Activated T-helper 2 cell treated with anti-CD3 and anti-CD28 coated beads, Interferon-gamma antibody, Interleukin-2, Interleukin-4, amounts not matched to agents 10 μg/mL and 5 μg/mL and 100 μg/mL, durations not matched to agents 14 hours and 24 hours and 36 hours (primary cell): ENCODE measurements at regions of chrX and their contacts with region 1.

Region 1: DNA sequence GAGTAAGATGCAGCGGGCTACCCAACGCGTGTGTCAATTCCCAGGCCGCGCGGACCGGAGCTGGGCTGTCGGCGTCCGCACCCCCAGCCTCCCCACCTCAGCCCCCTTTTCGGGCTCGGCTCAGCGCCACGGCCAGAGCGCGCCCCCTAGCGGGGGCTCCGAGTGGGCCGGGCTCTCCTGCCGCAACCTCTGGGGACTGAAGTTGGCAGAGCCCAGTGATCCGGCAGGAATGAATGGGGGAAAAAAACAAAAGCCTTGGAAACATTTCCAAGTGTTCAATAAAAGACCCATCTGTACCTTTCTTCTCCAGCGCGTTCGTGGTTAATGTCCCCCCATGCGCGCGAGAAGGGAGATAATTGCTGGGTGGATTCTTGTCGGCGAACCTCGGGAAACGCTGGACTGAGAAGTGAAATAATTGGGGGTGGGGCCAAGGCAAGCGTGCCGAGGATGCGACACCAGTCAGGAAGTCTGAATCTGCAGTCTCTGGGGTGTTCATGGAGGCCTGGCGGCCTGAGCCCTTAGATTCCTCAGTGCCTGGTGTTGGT is 5.2 kb upstream of the ARX start:
- DNase-seq: no peak
- H3K4me3 Mint-ChIP-seq: peak overlapping the region; percentile 39
- H3K27ac Mint-ChIP-seq: no peak overlapping the region
- H3K4me1 Mint-ChIP-seq: peaks cover 7% of the 10 kb centered on the region
- H3K27me3 Mint-ChIP-seq: peaks cover 71% of the 10 kb centered on the region

Region 2: GRCh38 chrX:24767557-24767956 is 253.4 kb before region 1 on chrX:
- intact Hi-C with region 1: no loop called
- DNase-seq: no peak
- H3K4me3 Mint-ChIP-seq: no peak overlapping the region
- H3K27ac Mint-ChIP-seq: peak overlapping the region; percentile 42
- H3K4me1 Mint-ChIP-seq: peaks cover 8% of the 10 kb centered on the region
- H3K27me3 Mint-ChIP-seq: no peaks in the 10 kb centered on the region

Region 3: DNA sequence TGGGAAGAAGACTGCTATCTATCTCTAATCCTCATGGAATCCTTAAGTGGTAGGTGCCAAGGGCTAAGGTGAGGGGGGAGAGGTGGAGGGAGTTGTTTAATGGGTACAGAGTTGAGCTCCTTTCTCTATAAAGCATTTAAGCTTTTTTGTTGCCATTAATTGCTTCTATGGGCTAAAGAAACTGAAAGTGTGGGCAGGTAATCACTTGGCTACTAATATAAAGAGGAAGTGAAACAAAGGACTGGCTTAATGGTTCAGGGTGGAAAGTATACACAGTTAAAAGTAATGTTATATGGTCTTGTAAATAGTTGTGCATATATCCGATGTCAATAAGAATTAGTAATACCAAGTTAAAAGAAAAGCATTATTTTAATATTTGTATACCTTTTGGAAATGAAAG is 243.3 kb before region 1 on chrX:
- intact Hi-C with region 1: no loop called
- DNase-seq: no peak
- H3K4me3 Mint-ChIP-seq: no peak overlapping the region
- H3K27ac Mint-ChIP-seq: no peak overlapping the region
- H3K4me1 Mint-ChIP-seq: peaks cover 17% of the 10 kb centered on the region
- H3K27me3 Mint-ChIP-seq: no peaks in the 10 kb centered on the region

Region 4: DNA sequence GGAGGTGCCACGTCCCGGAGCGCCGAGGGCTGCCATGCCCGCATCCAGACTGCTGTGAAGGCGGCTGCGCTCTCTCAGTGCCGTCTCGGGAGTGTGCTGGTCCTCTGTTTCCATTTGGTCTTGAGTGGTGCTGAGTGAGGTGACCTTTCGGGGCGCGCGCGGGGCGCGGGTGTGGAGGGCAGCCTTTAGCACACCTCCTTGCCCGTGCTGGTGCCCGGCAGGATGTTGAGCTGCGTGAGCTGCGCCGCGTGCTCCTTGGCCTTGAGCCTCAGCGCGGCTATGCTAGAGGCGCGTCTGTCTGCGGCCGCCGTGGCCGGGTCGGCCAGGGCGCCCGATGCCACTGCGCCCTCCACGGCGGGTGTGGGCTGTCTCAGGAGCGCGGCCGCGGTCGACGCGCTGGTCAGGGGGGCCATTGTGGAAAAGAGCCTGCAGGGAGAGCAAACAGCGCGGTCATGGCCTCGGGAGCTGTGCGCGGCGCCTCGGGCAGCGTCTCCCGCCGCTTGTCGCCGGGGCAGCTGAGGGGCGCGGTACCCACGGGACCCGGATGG is 16.4 kb before region 1 on chrX:
- intact Hi-C with region 1: loop called (anchors 2 kb)
- DNase-seq: no peak
- H3K4me3 Mint-ChIP-seq: no peak overlapping the region
- H3K27ac Mint-ChIP-seq: no peak overlapping the region
- H3K4me1 Mint-ChIP-seq: peaks cover 8% of the 10 kb centered on the region
- H3K27me3 Mint-ChIP-seq: peaks cover 45% of the 10 kb centered on the region

Region 5: GRCh38 chrX:25039036-25039435 is 18.1 kb after region 1 on chrX:
- intact Hi-C with region 1: no loop called
- DNase-seq: no peak
- H3K4me3 Mint-ChIP-seq: no peak overlapping the region
- H3K27ac Mint-ChIP-seq: no peak overlapping the region
- H3K4me1 Mint-ChIP-seq: no peaks in the 10 kb centered on the region
- H3K27me3 Mint-ChIP-seq: peaks cover 5% of the 10 kb centered on the region

Region 6: GRCh38 chrX:25144043-25144940 is 123.3 kb after region 1 on chrX:
- intact Hi-C with region 1: loop called (anchors 2 kb)
- DNase-seq: no peak
- H3K4me3 Mint-ChIP-seq: no peak overlapping the region
- H3K27ac Mint-ChIP-seq: no peak overlapping the region
- H3K4me1 Mint-ChIP-seq: peaks cover 2% of the 10 kb centered on the region
- H3K27me3 Mint-ChIP-seq: peaks cover 6% of the 10 kb centered on the region

Region 7: GRCh38 chrX:25241461-25241860 is 220.5 kb after region 1 on chrX:
- intact Hi-C with region 1: no loop called
- DNase-seq: no peak
- H3K4me3 Mint-ChIP-seq: no peak overlapping the region
- H3K27ac Mint-ChIP-seq: no peak overlapping the region
- H3K4me1 Mint-ChIP-seq: no peaks in the 10 kb centered on the region
- H3K27me3 Mint-ChIP-seq: no peaks in the 10 kb centered on the region